ENCODE measurements at regions of chr11 and their contacts with region 1.

Region 1: GRCh38 chr11:128630367-128631230 is 43.2 kb upstream of the ETS1 start:
- DNase-seq: peak; percentile 78 to 93 (median 86)
- ATAC-seq: peak; percentile 92
- H3K4me3 ChIP-seq: peak overlapping the region; percentile 17
- H3K4me3 Mint-ChIP-seq: peak overlapping the region; percentile 56 to 85 (median 76)
- H3K27ac ChIP-seq: peak overlapping the region; percentile 63
- H3K27ac Mint-ChIP-seq: peak overlapping the region; percentile 88 to 100 (median 95)
- H3K4me1 ChIP-seq: peaks cover 53 to 61% of the 10 kb centered on the region in 2 donors
- H3K4me1 Mint-ChIP-seq: peaks cover 46 to 73% (median 68%) of the 10 kb centered on the region in 7 donors
- H3K27me3 ChIP-seq: no peaks in the 10 kb centered on the region
- H3K27me3 Mint-ChIP-seq: no peaks in the 10 kb centered on the region

Region 2: GRCh38 chr11:126990716-126991480 is 1639.7 kb before region 1 on chr11:
- CTCF ChIA-PET with region 1: no interaction called
- POLR2A ChIA-PET with region 1: no interaction called
- intact Hi-C with region 1: no loop called
- DNase-seq: no peak
- ATAC-seq: no peak
- H3K4me3 ChIP-seq: no peak overlapping the region
- H3K4me3 Mint-ChIP-seq: no peak overlapping the region
- H3K27ac ChIP-seq: no peak overlapping the region
- H3K27ac Mint-ChIP-seq: no peak overlapping the region
- H3K4me1 ChIP-seq: no peaks in the 10 kb centered on the region
- H3K4me1 Mint-ChIP-seq: peaks cover 0 to 3% (median 0%) of the 10 kb centered on the region in 7 donors
- H3K27me3 ChIP-seq: no peaks in the 10 kb centered on the region
- H3K27me3 Mint-ChIP-seq: peaks cover 7 to 47% (median 37%) of the 10 kb centered on the region in 5 donors

Region 3: GRCh38 chr11:128039140-128040021 is 591.2 kb before region 1 on chr11:
- CTCF ChIA-PET with region 1: interaction called, 5 read pairs
- POLR2A ChIA-PET with region 1: no interaction called
- intact Hi-C with region 1: loop called in 1 of 2 experiments (anchors 2 kb)
- DNase-seq: peak; percentile 25 to 83 (median 74)
- ATAC-seq: peak; percentile 97
- H3K4me3 ChIP-seq: peak overlapping the region; percentile 38
- H3K4me3 Mint-ChIP-seq: peak overlapping the region in 9 of 10 donors; percentile 61 to 79 (median 70)
- H3K27ac ChIP-seq: peak overlapping the region; percentile 49
- H3K27ac Mint-ChIP-seq: peak overlapping the region in 8 of 9 donors; percentile 71 to 94 (median 90)
- H3K4me1 ChIP-seq: peaks cover 68 to 74% of the 10 kb centered on the region in 2 donors
- H3K4me1 Mint-ChIP-seq: peaks cover 25 to 56% (median 41%) of the 10 kb centered on the region in 7 donors
- H3K27me3 ChIP-seq: no peaks in the 10 kb centered on the region
- H3K27me3 Mint-ChIP-seq: peaks cover 0 to 3% (median 0%) of the 10 kb centered on the region in 5 donors

Region 4: GRCh38 chr11:128283451-128283850 is 347.1 kb before region 1 on chr11:
- CTCF ChIA-PET with region 1: interaction called, 148 read pairs
- POLR2A ChIA-PET with region 1: interaction called, 58 read pairs
- intact Hi-C with region 1: no loop called
- DNase-seq: no peak
- ATAC-seq: no peak
- H3K4me3 ChIP-seq: no peak overlapping the region
- H3K4me3 Mint-ChIP-seq: no peak overlapping the region
- H3K27ac ChIP-seq: no peak overlapping the region
- H3K27ac Mint-ChIP-seq: no peak overlapping the region
- H3K4me1 ChIP-seq: peaks cover 26 to 28% of the 10 kb centered on the region in 2 donors
- H3K4me1 Mint-ChIP-seq: peaks cover 28 to 46% (median 41%) of the 10 kb centered on the region in 7 donors
- H3K27me3 ChIP-seq: no peaks in the 10 kb centered on the region
- H3K27me3 Mint-ChIP-seq: peaks cover 0 to 12% (median 0%) of the 10 kb centered on the region in 5 donors

Region 5: DNA sequence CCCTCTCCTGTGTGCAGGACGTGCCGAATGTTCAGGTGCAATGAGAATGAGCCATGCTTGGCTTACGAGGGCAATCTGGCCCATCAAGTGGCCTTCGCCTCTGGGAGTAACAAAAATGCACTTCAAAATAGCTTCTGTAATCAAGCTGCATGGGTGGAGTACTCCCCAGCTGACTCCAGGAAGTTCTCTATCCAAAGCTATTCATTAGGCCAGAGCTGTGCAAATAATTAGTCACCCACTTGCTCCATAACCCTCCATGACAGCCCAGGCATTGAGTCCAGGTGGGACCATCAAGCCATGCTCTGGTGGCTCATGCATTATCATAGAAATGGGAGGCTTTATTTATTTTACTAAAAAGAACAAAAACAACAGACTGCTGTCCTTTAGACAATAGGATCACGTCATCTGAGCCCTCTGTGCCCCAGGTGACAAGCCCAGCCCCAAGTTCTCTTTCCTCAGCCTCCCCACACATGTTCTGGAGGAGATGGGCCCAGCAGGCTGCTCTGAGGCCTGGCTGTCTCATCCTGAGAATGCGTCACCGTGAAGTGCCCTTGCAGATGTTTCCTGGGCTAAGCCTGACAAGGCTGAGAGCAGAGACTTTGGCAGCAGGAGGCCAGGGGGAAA is 288.0 kb before region 1 on chr11:
- CTCF ChIA-PET with region 1: interaction called, 4 read pairs
- POLR2A ChIA-PET with region 1: interaction called, 6 read pairs
- intact Hi-C with region 1: loop called in 1 of 2 experiments (anchors 1 kb)
- DNase-seq: peak in 5 of 9 donors; percentile 46 to 77 (median 63)
- ATAC-seq: peak; percentile 54
- H3K4me3 ChIP-seq: peak overlapping the region; percentile 57
- H3K4me3 Mint-ChIP-seq: peak overlapping the region; percentile 74 to 90 (median 84)
- H3K27ac ChIP-seq: peak overlapping the region; percentile 93
- H3K27ac Mint-ChIP-seq: peak overlapping the region; percentile 97 to 99 (median 99)
- H3K4me1 ChIP-seq: peaks cover 50 to 64% of the 10 kb centered on the region in 2 donors
- H3K4me1 Mint-ChIP-seq: peaks cover 52 to 99% (median 94%) of the 10 kb centered on the region in 7 donors
- H3K27me3 ChIP-seq: no peaks in the 10 kb centered on the region
- H3K27me3 Mint-ChIP-seq: no peaks in the 10 kb centered on the region

Region 6: GRCh38 chr11:128488471-128488870 is 142.1 kb before region 1 on chr11:
- CTCF ChIA-PET with region 1: interaction called, 7 read pairs
- POLR2A ChIA-PET with region 1: interaction called, 12 read pairs
- intact Hi-C with region 1: no loop called
- DNase-seq: peak in 1 of 9 donors; percentile 73
- ATAC-seq: peak; percentile 31
- H3K4me3 ChIP-seq: no peak overlapping the region
- H3K4me3 Mint-ChIP-seq: peak overlapping the region; percentile 62 to 99 (median 76)
- H3K27ac ChIP-seq: peak overlapping the region; percentile 97
- H3K27ac Mint-ChIP-seq: peak overlapping the region; percentile 73 to 99 (median 96)
- H3K4me1 ChIP-seq: peaks cover 96% of the 10 kb centered on the region in 2 donors
- H3K4me1 Mint-ChIP-seq: peaks cover 70 to 100% (median 100%) of the 10 kb centered on the region in 7 donors
- H3K27me3 ChIP-seq: no peaks in the 10 kb centered on the region
- H3K27me3 Mint-ChIP-seq: no peaks in the 10 kb centered on the region

Region 7: GRCh38 chr11:128522055-128522942 is 108.3 kb before region 1 on chr11:
- CTCF ChIA-PET with region 1: interaction called, 86 read pairs
- POLR2A ChIA-PET with region 1: interaction called, 546 read pairs
- intact Hi-C with region 1: loop called (anchors 1 kb)
- DNase-seq: peak; percentile 67 to 95 (median 84)
- ATAC-seq: peak; percentile 87
- H3K4me3 ChIP-seq: peak overlapping the region; percentile 96
- H3K4me3 Mint-ChIP-seq: peak overlapping the region; percentile 94 to 100 (median 98)
- H3K27ac ChIP-seq: peak overlapping the region; percentile 97
- H3K27ac Mint-ChIP-seq: peak overlapping the region; percentile 94 to 99 (median 98)
- H3K4me1 ChIP-seq: peaks cover 36 to 43% of the 10 kb centered on the region in 2 donors
- H3K4me1 Mint-ChIP-seq: peaks cover 35 to 52% (median 45%) of the 10 kb centered on the region in 7 donors
- H3K27me3 ChIP-seq: no peaks in the 10 kb centered on the region
- H3K27me3 Mint-ChIP-seq: peaks cover 0 to 3% (median 0%) of the 10 kb centered on the region in 5 donors

Region 8: GRCh38 chr11:128733440-128734102 is 103.0 kb after region 1 on chr11:
- CTCF ChIA-PET with region 1: interaction called, 10 read pairs
- POLR2A ChIA-PET with region 1: interaction called, 5 read pairs
- intact Hi-C with region 1: no loop called
- DNase-seq: peak in 3 of 9 donors; percentile 27 to 43 (median 37)
- ATAC-seq: peak; percentile 39
- H3K4me3 ChIP-seq: peak overlapping the region; percentile 20
- H3K4me3 Mint-ChIP-seq: peak overlapping the region; percentile 79 to 92 (median 85)
- H3K27ac ChIP-seq: peak overlapping the region; percentile 41
- H3K27ac Mint-ChIP-seq: peak overlapping the region; percentile 85 to 98 (median 90)
- H3K4me1 ChIP-seq: peaks cover 96 to 100% of the 10 kb centered on the region in 2 donors
- H3K4me1 Mint-ChIP-seq: peaks cover 81 to 100% (median 98%) of the 10 kb centered on the region in 7 donors
- H3K27me3 ChIP-seq: no peaks in the 10 kb centered on the region
- H3K27me3 Mint-ChIP-seq: no peaks in the 10 kb centered on the region

Measured in naive thymus-derived CD4-positive, alpha-beta T cell (primary cell).